Ovary (tissue), 10 donors: ENCODE measurements at regions of chr6 and their contacts with region 1.

Region 1: DNA sequence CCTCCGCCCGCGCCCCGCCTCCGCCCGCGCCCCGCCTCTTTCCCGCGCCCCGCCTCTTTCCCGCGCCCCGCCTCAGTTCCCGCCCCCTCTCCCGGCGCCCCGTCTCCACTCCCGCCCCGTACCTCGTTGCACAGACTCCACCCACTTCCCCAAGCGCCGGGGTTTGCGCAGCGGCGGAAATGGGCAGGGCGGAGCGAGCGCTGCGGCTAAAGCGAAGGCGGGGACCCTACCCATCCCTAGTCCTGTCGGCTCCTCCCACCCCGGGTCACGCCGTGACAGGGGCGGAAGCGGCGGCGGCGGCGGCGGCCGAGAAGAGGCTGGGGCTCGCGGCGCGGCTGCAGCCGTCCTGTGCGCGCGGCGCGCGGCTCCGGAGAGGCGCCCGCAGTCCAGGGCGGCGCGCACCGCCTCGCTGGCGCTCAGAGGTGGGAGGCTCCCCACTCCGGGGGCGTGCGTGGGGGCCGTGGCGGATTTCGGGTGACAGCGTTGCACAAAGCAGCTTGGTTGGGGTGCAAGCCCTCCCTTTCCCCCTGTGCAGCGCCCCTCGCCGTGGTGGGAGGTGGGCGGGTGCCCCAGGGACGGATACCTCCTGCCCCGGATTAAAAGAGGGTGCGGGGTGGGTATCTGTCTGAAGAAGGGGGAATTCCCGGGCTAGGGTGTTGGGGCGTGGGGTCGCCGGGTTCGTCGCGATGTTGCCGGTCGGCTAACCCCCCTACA is at the start of gene KDM1B:
- DNase-seq: peak; percentile 98 to 99 (median 98)
- H3K4me3 ChIP-seq: peak within 1 kb of the TSS; percentile 97
- H3K27ac ChIP-seq: peak within 1 kb of the TSS; percentile 50 to 70
- H3K4me1 ChIP-seq: peaks cover 2% of the 10 kb centered on the region
- H3K27me3 ChIP-seq: no peaks in the 10 kb centered on the region
- CTCF ChIP-seq: no peak
- EP300 ChIP-seq: no peak
- POLR2A ChIP-seq: peak; percentile 54
- total RNA-seq, gene KDM1B: 9.3 to 21.7 (median 13.7) TPM

Region 2: DNA sequence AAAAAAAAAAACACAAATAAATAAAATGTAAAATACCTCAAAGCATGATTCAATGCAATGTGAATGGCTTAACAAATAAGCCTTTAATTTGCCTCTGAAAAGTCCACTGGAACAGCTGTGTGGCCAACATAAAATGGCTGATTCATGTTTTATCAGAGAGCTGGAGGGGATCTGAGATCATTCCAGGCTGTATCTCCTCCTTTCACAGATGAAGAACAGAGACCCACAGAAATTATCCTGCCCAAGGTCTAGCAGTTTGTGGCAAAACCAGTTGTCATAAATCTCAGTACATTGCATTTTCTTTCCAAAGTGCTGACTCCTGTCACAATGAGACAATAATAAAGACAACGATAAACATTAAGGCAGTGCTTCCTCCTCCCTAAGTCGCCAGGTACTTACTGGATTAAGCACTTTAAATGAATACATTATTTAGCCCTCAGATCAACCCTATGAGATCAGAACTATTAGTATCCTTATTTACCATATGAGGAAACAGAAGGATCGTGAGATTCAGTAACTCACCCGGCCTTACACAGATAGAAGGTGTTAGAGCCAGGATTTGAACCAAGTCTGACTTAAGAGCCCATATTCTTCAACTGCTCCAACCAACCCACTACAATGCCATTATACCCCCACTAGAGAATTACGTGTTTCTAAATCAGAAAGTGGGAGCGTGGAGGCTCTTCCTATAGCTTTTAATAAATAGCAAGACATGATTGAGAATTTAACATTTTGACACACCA is 286.1 kb before region 1 on chr6:
- intact Hi-C with region 1: no loop called
- DNase-seq: no peak
- H3K4me3 ChIP-seq: no peak overlapping the region
- H3K27ac ChIP-seq: no peak overlapping the region
- H3K4me1 ChIP-seq: peaks cover 10% of the 10 kb centered on the region
- H3K27me3 ChIP-seq: no peaks in the 10 kb centered on the region
- CTCF ChIP-seq: no peak
- EP300 ChIP-seq: no peak
- POLR2A ChIP-seq: no peak

Region 3: DNA sequence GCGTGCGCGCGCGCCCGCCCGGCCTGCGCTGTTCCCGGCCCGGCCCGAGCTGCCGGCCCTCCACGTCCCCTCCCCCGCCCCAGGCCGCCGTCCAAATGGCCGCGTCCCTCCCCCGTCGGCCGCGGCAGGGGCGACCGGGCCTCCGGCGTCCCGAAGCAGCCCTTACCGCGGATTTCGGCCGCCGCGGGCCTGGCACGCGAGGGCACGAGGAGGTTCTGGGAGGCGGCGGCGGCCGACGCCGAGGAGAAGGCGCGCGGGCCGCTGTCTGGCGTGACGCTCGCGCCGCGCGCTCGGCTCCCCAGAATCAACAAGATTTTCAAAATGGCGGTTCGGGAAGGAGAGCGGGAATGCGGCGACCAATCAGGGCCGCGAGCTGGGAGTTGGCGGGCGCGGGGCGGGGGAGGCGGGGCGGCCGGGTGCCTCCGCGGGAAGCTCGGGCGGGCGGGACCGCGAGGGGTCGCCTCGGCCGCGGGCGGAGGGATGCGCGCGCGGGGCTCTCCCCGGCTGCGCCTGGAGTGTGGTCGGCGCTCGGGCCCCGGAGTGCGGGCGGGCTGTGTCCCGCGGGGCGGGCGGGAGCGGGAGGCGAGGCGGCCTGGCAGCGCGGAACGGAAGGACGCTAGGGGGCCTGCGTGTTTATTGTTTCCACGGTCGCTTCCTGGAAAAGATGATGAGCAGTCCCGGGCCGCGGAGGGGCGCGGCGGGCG is 109.1 kb after region 1 on chr6 and contains the start of gene DEK:
- intact Hi-C with region 1: loop called in 1 of 4 experiments (anchors 10 kb)
- DNase-seq: peak; percentile 87 to 93 (median 88)
- H3K4me3 ChIP-seq: peak within 1 kb of the TSS; percentile 83
- H3K27ac ChIP-seq: peak within 1 kb of the TSS; percentile 93 to 99
- H3K4me1 ChIP-seq: peaks cover 8% of the 10 kb centered on the region
- H3K27me3 ChIP-seq: no peaks in the 10 kb centered on the region
- CTCF ChIP-seq: peak; percentile 47 to 62 (median 50)
- EP300 ChIP-seq: no peak
- POLR2A ChIP-seq: peak; percentile 49
- total RNA-seq, gene DEK: 63.5 to 143 (median 79.1) TPM

Region 4: DNA sequence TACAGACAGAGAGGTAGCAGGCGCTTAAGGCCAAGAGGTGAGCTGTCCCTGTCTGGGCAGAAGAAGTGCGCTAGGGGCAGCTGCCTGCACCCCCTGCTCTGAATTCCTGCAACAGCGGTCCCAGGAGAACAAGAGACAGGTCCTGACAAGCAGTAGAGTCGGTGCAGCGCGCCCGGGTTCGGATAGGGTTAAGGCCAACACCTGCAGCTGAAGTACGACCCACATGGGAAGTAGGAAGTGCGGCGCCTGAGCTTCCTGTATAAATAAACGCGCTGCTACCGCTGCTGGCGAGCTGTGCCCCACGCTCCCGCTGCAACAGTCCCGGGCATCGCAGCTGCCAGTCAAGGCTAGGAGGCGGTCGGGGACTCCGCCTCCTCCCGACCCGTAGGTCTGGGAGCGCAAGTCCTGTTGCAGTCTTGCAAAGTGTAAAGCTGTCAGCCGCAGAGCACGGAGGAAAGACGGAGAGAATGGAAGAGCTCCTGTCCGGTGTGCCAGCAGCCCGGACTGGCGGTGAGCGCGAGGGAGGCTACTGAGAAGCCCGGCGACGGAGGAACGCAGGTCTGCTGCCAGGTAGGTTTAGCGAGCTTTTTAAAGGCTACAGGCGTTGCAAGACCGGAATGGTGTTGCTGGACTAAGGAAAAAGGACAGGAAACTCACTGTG is 231.9 kb after region 1 on chr6 and contains the start of gene RNF144B:
- intact Hi-C with region 1: no loop called
- DNase-seq: peak; percentile 27 to 55 (median 31)
- H3K4me3 ChIP-seq: peak within 1 kb of the TSS; percentile 52
- H3K27ac ChIP-seq: no peak within 1 kb of the TSS
- H3K4me1 ChIP-seq: no peaks in the 10 kb centered on the region
- H3K27me3 ChIP-seq: no peaks in the 10 kb centered on the region
- CTCF ChIP-seq: no peak
- EP300 ChIP-seq: no peak
- POLR2A ChIP-seq: no peak
- total RNA-seq, gene RNF144B: 2.5 to 18.7 (median 4.9) TPM